ENCODE measurements at regions of chr5 and their contacts with region 1.

Region 1: GRCh38 chr5:67233728-67234127 is 37.1 kb upstream of the CD180 start:
- DNase-seq: no peak
- H3K4me3 ChIP-seq: no peak overlapping the region
- H3K27ac ChIP-seq: no peak overlapping the region
- H3K4me1 ChIP-seq: peaks cover 0 to 4% (median 1%) of the 10 kb centered on the region in 4 experiments; a peak in 2 of 7 replicates
- H3K27me3 ChIP-seq: no peaks in the 10 kb centered on the region; a peak in 1 of 7 replicates
- CTCF ChIP-seq: peak in 1 of 3 experiments; percentile 1; a peak in 1 of 4 replicates
- EP300 ChIP-seq: no peak
- POLR2A ChIP-seq: no peak
- RAD21 ChIP-seq: peak; percentile 3 to 34; a peak in 1 of 4 replicates

Region 2: GRCh38 chr5:67246108-67246507 is 12.4 kb after region 1 on chr5:
- CTCF ChIA-PET with region 1: interaction called, 13 read pairs
- POLR2A ChIA-PET with region 1: no interaction called
- DNase-seq: no peak
- H3K4me3 ChIP-seq: no peak overlapping the region
- H3K27ac ChIP-seq: no peak overlapping the region
- H3K4me1 ChIP-seq: peaks cover 0 to 4% (median 1%) of the 10 kb centered on the region in 4 experiments; a peak in 2 of 7 replicates
- H3K27me3 ChIP-seq: no peaks in the 10 kb centered on the region
- CTCF ChIP-seq: peak in 2 of 3 experiments; percentile 28 to 44; a peak in 2 of 4 replicates
- EP300 ChIP-seq: no peak
- POLR2A ChIP-seq: no peak
- RAD21 ChIP-seq: peak; percentile 75 to 76

Region 3: GRCh38 chr5:67287510-67288268 is 54.0 kb after region 1 on chr5:
- CTCF ChIA-PET with region 1: no interaction called
- POLR2A ChIA-PET with region 1: no interaction called
- DNase-seq: no peak
- H3K4me3 ChIP-seq: no peak overlapping the region
- H3K27ac ChIP-seq: no peak overlapping the region
- H3K4me1 ChIP-seq: no peaks in the 10 kb centered on the region
- H3K27me3 ChIP-seq: no peaks in the 10 kb centered on the region
- CTCF ChIP-seq: no peak
- EP300 ChIP-seq: no peak
- POLR2A ChIP-seq: no peak
- RAD21 ChIP-seq: no peak